Aorta (tissue), 5 donors: ENCODE measurements at regions of chr11 and their contacts with region 1.

Region 1: GRCh38 chr11:34105079-34105956 is at the start of gene NAT10:
- DNase-seq: peak; percentile 97 to 98
- ATAC-seq: peak; percentile 99
- H3K4me3 ChIP-seq: peak within 1 kb of the TSS; percentile 27 to 52
- H3K27ac ChIP-seq: peak within 1 kb of the TSS; percentile 59 to 62
- H3K4me1 ChIP-seq: no peaks in the 10 kb centered on the region
- H3K27me3 ChIP-seq: no peaks in the 10 kb centered on the region
- total RNA-seq, gene NAT10: 33.6 to 42.4 TPM

Region 2: GRCh38 chr11:33996498-33997454 is 108.5 kb before region 1 on chr11:
- intact Hi-C with region 1: loop called (anchors 5 to 10 kb)
- DNase-seq: peak; percentile 73 to 78
- ATAC-seq: peak; percentile 93
- H3K4me3 ChIP-seq: no peak overlapping the region
- H3K27ac ChIP-seq: no peak overlapping the region
- H3K4me1 ChIP-seq: no peaks in the 10 kb centered on the region
- H3K27me3 ChIP-seq: no peaks in the 10 kb centered on the region